CD4-positive, alpha-beta T cell (primary cell): ENCODE measurements at regions of chr6 and their contacts with region 1.

Region 1: GRCh38 chr6:79570129-79571029 is 33.1 kb upstream of the LCA5 start:
- DNase-seq: peak in 3 of 14 experiments; percentile 27 to 46 (median 43)
- ATAC-seq: peak; percentile 57
- H3K4me3 ChIP-seq: no peak overlapping the region
- H3K4me3 Mint-ChIP-seq: no peak overlapping the region
- H3K27ac ChIP-seq: no peak overlapping the region
- H3K27ac Mint-ChIP-seq: no peak overlapping the region
- H3K4me1 ChIP-seq: no peaks in the 10 kb centered on the region
- H3K4me1 Mint-ChIP-seq: peaks cover 5% of the 10 kb centered on the region
- H3K27me3 ChIP-seq: no peaks in the 10 kb centered on the region
- H3K27me3 Mint-ChIP-seq: no peaks in the 10 kb centered on the region
- CTCF ChIP-seq: peak; percentile 74

Region 2: DNA sequence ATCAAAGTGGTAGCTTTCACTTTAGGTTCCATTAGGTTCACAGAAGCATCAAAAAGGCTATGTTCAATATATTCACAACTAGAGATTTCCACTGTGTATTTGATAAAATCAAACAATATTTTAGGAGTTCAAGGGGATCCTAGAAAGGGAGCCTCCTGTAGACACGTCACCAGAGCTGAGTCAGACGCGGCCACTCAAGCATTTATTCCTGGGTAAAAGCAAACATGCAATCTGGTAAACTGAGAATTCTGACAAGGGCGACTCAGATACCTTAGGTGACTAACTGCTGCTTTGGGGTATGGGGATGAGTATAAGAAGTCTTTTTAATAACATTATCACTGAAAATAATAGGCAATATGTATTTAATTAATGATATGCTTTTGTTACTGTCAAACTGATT is 217.2 kb before region 1 on chr6:
- CTCF ChIA-PET with region 1: no interaction called
- POLR2A ChIA-PET with region 1: no interaction called
- intact Hi-C with region 1: no loop called
- DNase-seq: no peak
- ATAC-seq: no peak
- H3K4me3 ChIP-seq: no peak overlapping the region
- H3K4me3 Mint-ChIP-seq: no peak overlapping the region
- H3K27ac ChIP-seq: no peak overlapping the region
- H3K27ac Mint-ChIP-seq: no peak overlapping the region
- H3K4me1 ChIP-seq: no peaks in the 10 kb centered on the region
- H3K4me1 Mint-ChIP-seq: no peaks in the 10 kb centered on the region
- H3K27me3 ChIP-seq: no peaks in the 10 kb centered on the region
- H3K27me3 Mint-ChIP-seq: no peaks in the 10 kb centered on the region
- CTCF ChIP-seq: no peak

Region 3: DNA sequence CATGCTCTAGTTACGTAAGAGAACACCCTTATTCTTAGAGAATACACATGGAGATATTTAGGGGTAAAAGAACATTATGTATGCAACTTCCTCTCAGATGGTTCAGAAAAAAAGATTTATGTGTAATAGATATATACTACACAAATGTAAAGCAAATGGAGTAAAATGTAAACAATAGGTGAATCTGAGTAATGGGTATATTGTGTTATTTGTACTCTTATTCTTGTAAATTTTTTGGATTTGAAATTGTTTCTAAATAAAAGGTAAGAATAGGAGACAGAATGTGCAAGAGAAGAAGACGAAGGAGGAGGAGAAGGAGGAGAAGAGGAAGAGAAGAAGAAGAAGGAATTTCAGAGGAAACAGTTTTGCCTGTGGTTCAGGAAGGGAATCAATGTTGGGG is 10.7 kb before region 1 on chr6:
- CTCF ChIA-PET with region 1: no interaction called
- POLR2A ChIA-PET with region 1: no interaction called
- intact Hi-C with region 1: no loop called
- DNase-seq: no peak
- ATAC-seq: no peak
- H3K4me3 ChIP-seq: no peak overlapping the region
- H3K4me3 Mint-ChIP-seq: no peak overlapping the region
- H3K27ac ChIP-seq: no peak overlapping the region
- H3K27ac Mint-ChIP-seq: no peak overlapping the region
- H3K4me1 ChIP-seq: no peaks in the 10 kb centered on the region
- H3K4me1 Mint-ChIP-seq: no peaks in the 10 kb centered on the region
- H3K27me3 ChIP-seq: no peaks in the 10 kb centered on the region
- H3K27me3 Mint-ChIP-seq: no peaks in the 10 kb centered on the region
- CTCF ChIP-seq: no peak

Region 4: DNA sequence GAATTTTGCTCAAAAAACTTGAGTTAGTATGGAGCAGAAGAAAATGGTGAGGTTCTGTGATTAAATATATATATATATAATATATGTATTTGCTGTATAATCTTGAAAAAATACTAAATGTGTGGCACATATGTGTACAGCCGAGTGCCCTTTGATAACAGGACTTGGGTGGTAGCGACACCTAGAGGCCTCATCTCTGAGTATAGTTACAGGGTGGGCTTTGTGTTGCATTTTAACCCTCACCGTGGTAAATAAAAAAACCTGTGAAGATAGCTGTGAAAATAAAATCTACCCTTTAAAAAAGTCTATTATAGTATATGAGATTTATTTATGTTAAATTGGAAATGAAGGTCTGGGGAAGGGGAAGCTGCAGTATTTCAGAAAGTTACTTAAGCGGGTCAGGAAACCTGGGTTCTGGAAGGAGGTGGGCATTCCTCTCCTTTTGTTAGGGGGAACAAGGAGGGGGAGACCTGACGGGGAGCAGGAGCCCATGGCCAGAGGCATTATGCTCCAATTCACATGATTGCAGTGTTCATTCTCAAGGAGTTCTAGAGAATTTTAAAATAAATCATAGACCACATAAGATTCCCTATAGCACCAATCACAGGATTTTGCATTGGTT is 143.4 kb after region 1 on chr6:
- CTCF ChIA-PET with region 1: interaction called, 3 read pairs
- POLR2A ChIA-PET with region 1: no interaction called
- intact Hi-C with region 1: loop called (anchors 1 to 2 kb)
- DNase-seq: peak; percentile 7 to 70 (median 32)
- ATAC-seq: peak; percentile 58
- H3K4me3 ChIP-seq: no peak overlapping the region
- H3K4me3 Mint-ChIP-seq: no peak overlapping the region
- H3K27ac ChIP-seq: no peak overlapping the region
- H3K27ac Mint-ChIP-seq: no peak overlapping the region
- H3K4me1 ChIP-seq: no peaks in the 10 kb centered on the region
- H3K4me1 Mint-ChIP-seq: no peaks in the 10 kb centered on the region
- H3K27me3 ChIP-seq: no peaks in the 10 kb centered on the region
- H3K27me3 Mint-ChIP-seq: peaks cover 4% of the 10 kb centered on the region
- CTCF ChIP-seq: peak; percentile 79

Region 5: GRCh38 chr6:79813854-79814709 is 243.7 kb after region 1 on chr6:
- CTCF ChIA-PET with region 1: no interaction called
- POLR2A ChIA-PET with region 1: no interaction called
- intact Hi-C with region 1: loop called (anchors 2 to 5 kb)
- DNase-seq: peak; percentile 24 to 69 (median 46)
- ATAC-seq: peak; percentile 46
- H3K4me3 ChIP-seq: no peak overlapping the region
- H3K4me3 Mint-ChIP-seq: no peak overlapping the region
- H3K27ac ChIP-seq: no peak overlapping the region
- H3K27ac Mint-ChIP-seq: no peak overlapping the region
- H3K4me1 ChIP-seq: no peaks in the 10 kb centered on the region
- H3K4me1 Mint-ChIP-seq: no peaks in the 10 kb centered on the region
- H3K27me3 ChIP-seq: no peaks in the 10 kb centered on the region
- H3K27me3 Mint-ChIP-seq: peaks cover 15% of the 10 kb centered on the region
- CTCF ChIP-seq: peak; percentile 87